ENCODE measurements at regions of chr4 and their contacts with region 1.

Region 1: DNA sequence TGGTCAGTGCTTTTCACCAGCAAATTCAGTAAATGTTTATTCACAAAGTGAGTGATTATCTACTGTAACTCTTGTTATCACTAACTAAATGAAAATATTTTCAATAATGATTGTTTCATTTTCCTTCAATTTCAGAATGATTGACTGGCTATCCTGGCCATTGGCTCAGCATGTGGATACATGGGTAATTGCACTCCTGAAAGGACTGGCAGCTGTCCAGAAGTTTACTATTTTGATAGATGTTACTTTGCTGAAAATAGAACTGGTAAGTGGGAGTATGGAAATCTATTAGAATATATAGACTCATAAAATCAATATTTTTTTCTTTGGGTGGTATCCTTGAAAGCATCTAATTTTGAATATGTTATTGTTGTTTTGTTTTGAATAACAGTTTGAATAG is 10.9 kb downstream of the USP38 start:
- DNase-seq: no peak
- H3K4me3 ChIP-seq: no peak overlapping the region
- H3K27ac ChIP-seq: no peak overlapping the region
- H3K4me1 ChIP-seq: no peaks in the 10 kb centered on the region
- H3K27me3 ChIP-seq: no peaks in the 10 kb centered on the region
- CTCF ChIP-seq: no peak
- EP300 ChIP-seq: no peak
- POLR2A ChIP-seq: no peak

Region 2: GRCh38 chr4:143329985-143330384 is 134.4 kb after region 1 on chr4:
- intact Hi-C with region 1: loop called in 2 of 4 experiments (anchors 5 to 10 kb)
- DNase-seq: no peak
- H3K4me3 ChIP-seq: no peak overlapping the region
- H3K27ac ChIP-seq: no peak overlapping the region
- H3K4me1 ChIP-seq: no peaks in the 10 kb centered on the region
- H3K27me3 ChIP-seq: no peaks in the 10 kb centered on the region
- CTCF ChIP-seq: no peak
- EP300 ChIP-seq: no peak
- POLR2A ChIP-seq: no peak

Region 3: GRCh38 chr4:143351774-143352451 is 156.3 kb after region 1 on chr4:
- intact Hi-C with region 1: no loop called
- DNase-seq: no peak
- H3K4me3 ChIP-seq: no peak overlapping the region
- H3K27ac ChIP-seq: peak overlapping the region in 1 of 2 donors; percentile 53
- H3K4me1 ChIP-seq: peaks cover 19% of the 10 kb centered on the region
- H3K27me3 ChIP-seq: no peaks in the 10 kb centered on the region
- CTCF ChIP-seq: no peak
- EP300 ChIP-seq: no peak
- POLR2A ChIP-seq: no peak

Region 4: GRCh38 chr4:143482840-143483239 is 287.3 kb after region 1 on chr4:
- intact Hi-C with region 1: loop called in 3 of 4 experiments (anchors 10 kb)
- DNase-seq: peak in 2 of 5 donors; percentile 24 to 34
- H3K4me3 ChIP-seq: no peak overlapping the region
- H3K27ac ChIP-seq: no peak overlapping the region
- H3K4me1 ChIP-seq: no peaks in the 10 kb centered on the region
- H3K27me3 ChIP-seq: no peaks in the 10 kb centered on the region
- CTCF ChIP-seq: peak; percentile 59 to 78 (median 78)
- EP300 ChIP-seq: no peak
- POLR2A ChIP-seq: no peak

Measured in ovary (tissue), 10 donors.